ENCODE measurements at regions of chr5 and their contacts with region 1.

Region 1: GRCh38 chr5:59799668-59800346 is 93.7 kb downstream of the PDE4D start:
- DNase-seq: peak in 3 of 9 experiments; percentile 8 to 61 (median 45)
- ATAC-seq: peak; percentile 62
- H3K4me3 ChIP-seq: no peak overlapping the region
- H3K4me3 Mint-ChIP-seq: no peak overlapping the region
- H3K27ac ChIP-seq: no peak overlapping the region
- H3K27ac Mint-ChIP-seq: no peak overlapping the region
- H3K4me1 ChIP-seq: no peaks in the 10 kb centered on the region
- H3K4me1 Mint-ChIP-seq: no peaks in the 10 kb centered on the region
- H3K27me3 ChIP-seq: no peaks in the 10 kb centered on the region
- H3K27me3 Mint-ChIP-seq: peaks cover 2% of the 10 kb centered on the region
- CTCF ChIP-seq: peak; percentile 75

Region 2: DNA sequence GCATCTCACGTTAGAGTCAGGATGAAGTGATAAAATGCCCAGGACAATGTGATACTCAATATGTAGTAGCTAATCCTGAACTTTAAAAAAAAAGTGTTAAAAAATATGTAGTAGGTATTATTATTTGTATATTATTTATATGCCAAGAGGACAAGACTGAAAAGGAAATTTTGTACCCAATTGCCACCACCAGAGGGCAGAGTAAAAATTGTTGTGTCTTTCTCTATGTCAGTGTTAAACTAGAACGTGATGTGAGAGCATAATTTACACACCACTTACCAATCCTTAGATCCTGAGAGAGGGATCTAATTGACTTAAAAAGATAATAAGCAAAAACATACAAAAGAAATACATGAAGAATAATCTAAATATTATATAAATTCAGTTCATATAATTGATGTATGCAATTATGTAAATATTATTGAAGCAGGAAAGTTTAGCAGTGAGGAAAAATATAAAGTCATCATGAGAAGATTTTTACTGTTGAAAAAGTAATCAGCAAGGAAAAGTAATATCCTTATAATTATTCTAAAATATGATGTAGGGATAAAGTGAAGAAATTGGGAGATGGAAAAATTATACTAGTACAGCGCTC is 928.1 kb before region 1 on chr5:
- CTCF ChIA-PET with region 1: no interaction called
- POLR2A ChIA-PET with region 1: no interaction called
- intact Hi-C with region 1: loop called in 1 of 2 experiments (anchors 5 kb)
- DNase-seq: peak in 3 of 9 experiments; percentile 23 to 49 (median 33)
- ATAC-seq: no peak
- H3K4me3 ChIP-seq: no peak overlapping the region
- H3K4me3 Mint-ChIP-seq: no peak overlapping the region
- H3K27ac ChIP-seq: no peak overlapping the region
- H3K27ac Mint-ChIP-seq: no peak overlapping the region
- H3K4me1 ChIP-seq: no peaks in the 10 kb centered on the region
- H3K4me1 Mint-ChIP-seq: no peaks in the 10 kb centered on the region
- H3K27me3 ChIP-seq: no peaks in the 10 kb centered on the region
- H3K27me3 Mint-ChIP-seq: peaks cover 3% of the 10 kb centered on the region
- CTCF ChIP-seq: peak; percentile 86

Region 3: DNA sequence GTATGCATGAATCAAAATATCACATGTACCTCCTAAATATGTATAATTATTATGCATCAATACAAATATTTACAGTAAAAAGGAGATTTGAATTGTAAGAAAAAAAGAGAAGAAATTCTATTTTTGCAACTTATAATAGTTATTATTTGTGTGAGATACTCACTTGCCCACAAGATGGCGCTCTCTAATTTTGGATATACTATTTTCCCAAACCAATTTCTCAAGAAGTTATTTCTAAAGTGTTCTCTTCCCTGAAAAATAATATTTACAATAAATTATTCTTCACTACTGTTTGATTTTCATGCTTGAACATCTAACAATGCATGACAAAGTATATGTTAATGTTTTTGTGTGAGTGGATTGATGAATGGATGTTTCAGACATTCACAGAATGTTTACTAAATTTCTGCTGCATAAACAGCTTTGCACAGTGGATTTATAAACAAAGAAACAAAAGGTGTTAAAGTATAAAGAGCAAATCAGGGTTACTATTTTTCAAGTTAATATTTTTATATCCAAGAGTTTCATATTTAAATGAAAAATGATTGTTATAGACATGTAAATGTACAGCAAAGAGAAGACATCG is 409.6 kb before region 1 on chr5:
- CTCF ChIA-PET with region 1: interaction called, 11 read pairs
- POLR2A ChIA-PET with region 1: no interaction called
- intact Hi-C with region 1: loop called (anchors 1 kb)
- DNase-seq: peak in 3 of 9 experiments; percentile 11 to 48 (median 23)
- ATAC-seq: no peak
- H3K4me3 ChIP-seq: no peak overlapping the region
- H3K4me3 Mint-ChIP-seq: no peak overlapping the region
- H3K27ac ChIP-seq: no peak overlapping the region
- H3K27ac Mint-ChIP-seq: no peak overlapping the region
- H3K4me1 ChIP-seq: no peaks in the 10 kb centered on the region
- H3K4me1 Mint-ChIP-seq: no peaks in the 10 kb centered on the region
- H3K27me3 ChIP-seq: no peaks in the 10 kb centered on the region
- H3K27me3 Mint-ChIP-seq: peaks cover 5% of the 10 kb centered on the region
- CTCF ChIP-seq: peak; percentile 81

Region 4: DNA sequence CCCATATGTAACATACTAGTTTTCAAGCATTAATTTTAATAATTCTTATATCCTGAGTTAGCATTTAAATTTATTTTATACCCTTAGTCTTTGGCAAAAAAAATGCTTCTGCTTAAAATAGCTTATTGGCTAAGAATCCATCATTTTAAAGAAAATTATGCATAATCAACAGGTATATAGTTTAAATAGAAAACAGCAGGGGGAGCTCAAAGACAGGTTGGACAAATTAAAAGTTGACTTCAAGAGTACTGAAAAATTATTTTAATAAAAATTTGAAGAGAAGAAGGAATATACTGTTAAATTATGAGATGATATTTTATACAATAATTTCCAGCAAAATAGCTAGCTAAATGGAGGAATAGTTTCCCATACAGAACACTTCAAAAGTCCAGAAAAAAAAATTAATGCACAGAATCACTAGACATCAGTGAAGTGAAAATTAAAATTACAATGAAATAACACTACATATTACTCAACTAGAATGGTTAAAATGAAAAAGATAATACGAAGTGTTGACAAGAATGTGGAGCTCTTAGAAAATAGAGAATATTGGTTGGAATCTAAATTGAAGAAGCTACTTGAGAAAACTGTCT is 293.4 kb before region 1 on chr5:
- CTCF ChIA-PET with region 1: no interaction called
- POLR2A ChIA-PET with region 1: no interaction called
- intact Hi-C with region 1: loop called in 1 of 2 experiments (anchors 10 kb)
- DNase-seq: peak in 1 of 9 experiments; percentile 10
- ATAC-seq: no peak
- H3K4me3 ChIP-seq: no peak overlapping the region
- H3K4me3 Mint-ChIP-seq: no peak overlapping the region
- H3K27ac ChIP-seq: no peak overlapping the region
- H3K27ac Mint-ChIP-seq: no peak overlapping the region
- H3K4me1 ChIP-seq: no peaks in the 10 kb centered on the region
- H3K4me1 Mint-ChIP-seq: no peaks in the 10 kb centered on the region
- H3K27me3 ChIP-seq: no peaks in the 10 kb centered on the region
- H3K27me3 Mint-ChIP-seq: no peaks in the 10 kb centered on the region
- CTCF ChIP-seq: no peak

Region 5: GRCh38 chr5:59810041-59810440 is 10.2 kb after region 1 on chr5:
- CTCF ChIA-PET with region 1: interaction called, 13 read pairs
- POLR2A ChIA-PET with region 1: no interaction called
- intact Hi-C with region 1: no loop called
- DNase-seq: peak; percentile 4 to 75 (median 50)
- ATAC-seq: peak; percentile 52
- H3K4me3 ChIP-seq: no peak overlapping the region
- H3K4me3 Mint-ChIP-seq: no peak overlapping the region
- H3K27ac ChIP-seq: no peak overlapping the region
- H3K27ac Mint-ChIP-seq: no peak overlapping the region
- H3K4me1 ChIP-seq: no peaks in the 10 kb centered on the region
- H3K4me1 Mint-ChIP-seq: peaks cover 4% of the 10 kb centered on the region
- H3K27me3 ChIP-seq: peaks cover 0 to 3% of the 10 kb centered on the region in 2 experiments
- H3K27me3 Mint-ChIP-seq: peaks cover 11% of the 10 kb centered on the region
- CTCF ChIP-seq: peak; percentile 96

Measured in CD8-positive, alpha-beta T cell (primary cell).